Heart right ventricle (tissue), 16 donors: ENCODE measurements at regions of chr6 and their contacts with region 1.

Region 1: GRCh38 chr6:116531675-116532570 is 13.6 kb downstream of the TRAPPC3L start:
- DNase-seq: peak; percentile 5 to 70
- ATAC-seq: peak; percentile 81 to 92 (median 84)
- H3K4me3 ChIP-seq: no peak overlapping the region
- H3K27ac ChIP-seq: no peak overlapping the region
- H3K4me1 ChIP-seq: peaks cover 0 to 34% (median 7%) of the 10 kb centered on the region in 9 donors
- H3K27me3 ChIP-seq: no peaks in the 10 kb centered on the region
- CTCF ChIP-seq: peak; percentile 54 to 91 (median 84)

Region 2: DNA sequence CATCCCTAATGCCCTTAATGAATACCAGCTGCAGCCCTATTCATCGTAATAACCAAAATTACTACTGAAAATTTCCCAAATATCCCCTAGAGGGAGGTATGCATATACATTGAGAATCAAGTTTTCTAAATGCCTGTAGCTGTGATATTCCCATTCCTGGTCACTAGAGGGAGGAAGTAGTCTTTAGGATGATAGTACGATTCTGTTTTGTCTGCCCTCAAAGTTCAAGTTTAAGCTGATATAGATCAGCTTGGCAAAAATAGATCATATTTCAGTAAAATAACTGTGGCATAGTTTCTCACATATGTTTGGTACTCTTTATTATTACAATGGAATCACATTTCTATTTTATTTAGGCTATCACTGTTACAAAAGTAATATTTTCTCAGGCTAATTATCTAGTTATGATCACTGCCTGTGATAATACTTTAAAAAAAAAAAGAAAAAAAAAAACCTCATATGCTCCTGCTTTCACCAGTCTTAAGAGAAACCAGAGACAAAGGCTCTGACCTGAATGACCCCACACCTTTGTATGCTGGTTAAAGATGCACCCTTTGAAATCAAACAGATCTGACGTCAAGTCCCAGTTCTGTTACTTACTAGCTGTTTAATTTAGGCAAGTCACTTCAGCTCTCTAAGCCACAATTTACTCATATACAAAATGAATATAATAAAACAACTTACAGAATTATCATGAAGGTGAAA is 263.2 kb before region 1 on chr6:
- intact Hi-C with region 1: loop called in 2 of 10 experiments (anchors 5 to 10 kb)
- DNase-seq: no peak
- ATAC-seq: peak in 5 of 8 donors; percentile 55 to 80 (median 68)
- H3K4me3 ChIP-seq: no peak overlapping the region
- H3K27ac ChIP-seq: no peak overlapping the region
- H3K4me1 ChIP-seq: peaks cover 0 to 20% (median 6%) of the 10 kb centered on the region in 9 donors
- H3K27me3 ChIP-seq: no peaks in the 10 kb centered on the region
- CTCF ChIP-seq: peak; percentile 39 to 87 (median 66)

Region 3: DNA sequence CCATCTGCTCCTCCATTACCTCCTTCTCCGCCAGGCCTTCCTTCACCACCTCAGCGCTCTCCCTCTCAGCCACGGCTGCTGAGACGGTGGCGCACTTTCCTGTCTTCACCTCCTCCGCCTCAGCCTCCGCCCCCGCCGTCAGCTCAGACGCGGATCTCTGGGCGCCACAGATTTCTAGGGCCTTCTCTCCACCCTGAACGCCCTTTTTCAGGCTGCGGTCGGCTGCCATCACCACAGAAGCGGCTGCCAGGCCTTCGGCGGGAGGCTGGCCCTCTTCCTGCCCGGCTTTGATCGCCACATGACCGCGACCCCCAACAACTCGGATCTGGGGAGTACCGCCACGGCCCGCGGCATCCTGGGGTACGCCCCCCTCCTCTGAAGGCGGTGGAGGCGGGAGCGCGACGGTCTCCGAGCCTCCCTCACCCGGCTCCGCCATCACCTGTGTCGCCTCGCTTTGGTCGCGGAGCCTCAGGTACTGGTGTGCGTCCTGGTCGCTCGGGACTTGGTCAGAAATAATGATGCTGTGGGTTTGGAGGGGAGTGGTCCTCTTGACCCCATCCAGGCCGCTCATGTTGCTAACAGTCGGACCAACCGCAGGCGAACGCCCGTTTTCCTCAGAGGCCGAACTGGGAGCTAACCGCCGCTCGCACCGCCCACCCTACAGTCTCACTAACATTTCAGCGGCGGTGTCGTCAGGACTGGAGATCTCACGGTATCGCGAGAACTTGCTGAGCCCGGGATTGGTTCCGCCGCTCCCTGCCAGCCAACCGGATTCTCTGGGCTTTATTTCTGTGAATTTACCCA is 252.5 kb before region 1 on chr6 and contains the start of gene TSPYL1:
- intact Hi-C with region 1: loop called in 2 of 10 experiments (anchors 10 kb)
- DNase-seq: peak; percentile 94 to 98
- ATAC-seq: peak; percentile 97 to 99 (median 98)
- H3K4me3 ChIP-seq: peak within 1 kb of the TSS; percentile 57 to 99 (median 90)
- H3K27ac ChIP-seq: peak within 1 kb of the TSS; percentile 89 to 100 (median 98)
- H3K4me1 ChIP-seq: peaks cover 3 to 71% (median 55%) of the 10 kb centered on the region in 9 donors
- H3K27me3 ChIP-seq: no peaks in the 10 kb centered on the region
- CTCF ChIP-seq: peak in 1 of 9 donors; percentile 24
- total RNA-seq, gene TSPYL1: 76.6 to 143 (median 114) TPM

Region 4: GRCh38 chr6:116287689-116288282 is 244.1 kb before region 1 on chr6:
- intact Hi-C with region 1: loop called in 9 of 10 experiments (anchors 2 to 10 kb)
- DNase-seq: no peak
- ATAC-seq: peak in 5 of 8 donors; percentile 64 to 78 (median 69)
- H3K4me3 ChIP-seq: no peak overlapping the region
- H3K27ac ChIP-seq: no peak overlapping the region
- H3K4me1 ChIP-seq: peaks cover 0 to 7% (median 3%) of the 10 kb centered on the region in 9 donors
- H3K27me3 ChIP-seq: no peaks in the 10 kb centered on the region
- CTCF ChIP-seq: peak; percentile 80 to 96 (median 91)

Region 5: DNA sequence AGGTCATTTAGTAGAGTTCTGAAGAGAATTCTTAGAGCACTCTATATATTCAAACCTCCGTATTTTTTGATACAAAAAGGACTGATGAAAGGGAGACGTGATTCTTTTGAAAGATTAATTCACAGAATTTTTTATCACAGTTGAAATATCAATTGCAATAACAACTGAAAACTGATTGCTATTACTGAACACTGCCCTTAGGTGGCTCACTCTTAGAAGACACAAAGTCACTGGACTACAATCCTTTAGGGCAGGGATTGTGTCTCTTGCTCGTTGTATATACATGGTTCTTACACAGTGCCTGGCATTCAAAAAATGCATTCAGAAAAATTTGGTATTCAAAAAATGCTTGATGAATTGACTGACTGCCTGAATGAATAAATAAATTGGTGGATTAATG is 87.8 kb before region 1 on chr6:
- intact Hi-C with region 1: loop called in 6 of 10 experiments (anchors 5 to 10 kb)
- DNase-seq: no peak
- ATAC-seq: peak in 1 of 8 donors; percentile 56
- H3K4me3 ChIP-seq: no peak overlapping the region
- H3K27ac ChIP-seq: no peak overlapping the region
- H3K4me1 ChIP-seq: peaks cover 0 to 50% (median 0%) of the 10 kb centered on the region in 9 donors
- H3K27me3 ChIP-seq: no peaks in the 10 kb centered on the region
- CTCF ChIP-seq: peak in 7 of 9 donors; percentile 41 to 61 (median 53)

Region 6: GRCh38 chr6:116511404-116512110 is 20.4 kb before region 1 on chr6 and contains the start of gene CALHM5:
- intact Hi-C with region 1: loop called in 3 of 10 experiments (anchors 1 to 2 kb)
- DNase-seq: peak; percentile 43 to 58
- ATAC-seq: peak; percentile 84 to 97 (median 92)
- H3K4me3 ChIP-seq: peak within 1 kb of the TSS; percentile 27 to 60 (median 52)
- H3K27ac ChIP-seq: peak within 1 kb of the TSS; percentile 76 to 92 (median 86)
- H3K4me1 ChIP-seq: peaks cover 0 to 24% (median 14%) of the 10 kb centered on the region in 9 donors
- H3K27me3 ChIP-seq: no peaks in the 10 kb centered on the region
- CTCF ChIP-seq: peak; percentile 18 to 83 (median 69)
- total RNA-seq, gene CALHM5: 1.1 to 2.8 (median 1.5) TPM

Region 7: GRCh38 chr6:116561377-116562018 is 29.6 kb after region 1 on chr6:
- intact Hi-C with region 1: loop called in 6 of 10 experiments (anchors 1 to 2 kb)
- DNase-seq: peak; percentile 64 to 71
- ATAC-seq: peak in 7 of 8 donors; percentile 43 to 67 (median 65)
- H3K4me3 ChIP-seq: peak overlapping the region in 1 of 10 donors; percentile 4
- H3K27ac ChIP-seq: no peak overlapping the region
- H3K4me1 ChIP-seq: peaks cover 0 to 12% (median 8%) of the 10 kb centered on the region in 9 donors
- H3K27me3 ChIP-seq: peaks cover 0 to 3% (median 0%) of the 10 kb centered on the region in 7 donors
- CTCF ChIP-seq: peak; percentile 81 to 96 (median 95)

Region 8: GRCh38 chr6:117188627-117189201 is 656.8 kb after region 1 on chr6:
- intact Hi-C with region 1: no loop called
- DNase-seq: no peak
- ATAC-seq: no peak
- H3K4me3 ChIP-seq: no peak overlapping the region
- H3K27ac ChIP-seq: no peak overlapping the region
- H3K4me1 ChIP-seq: no peaks in the 10 kb centered on the region
- H3K27me3 ChIP-seq: no peaks in the 10 kb centered on the region
- CTCF ChIP-seq: peak in 8 of 9 donors; percentile 21 to 58 (median 48)